A549 (cell line): ENCODE measurements at regions of chr19 and their contacts with region 1.

Region 1: DNA sequence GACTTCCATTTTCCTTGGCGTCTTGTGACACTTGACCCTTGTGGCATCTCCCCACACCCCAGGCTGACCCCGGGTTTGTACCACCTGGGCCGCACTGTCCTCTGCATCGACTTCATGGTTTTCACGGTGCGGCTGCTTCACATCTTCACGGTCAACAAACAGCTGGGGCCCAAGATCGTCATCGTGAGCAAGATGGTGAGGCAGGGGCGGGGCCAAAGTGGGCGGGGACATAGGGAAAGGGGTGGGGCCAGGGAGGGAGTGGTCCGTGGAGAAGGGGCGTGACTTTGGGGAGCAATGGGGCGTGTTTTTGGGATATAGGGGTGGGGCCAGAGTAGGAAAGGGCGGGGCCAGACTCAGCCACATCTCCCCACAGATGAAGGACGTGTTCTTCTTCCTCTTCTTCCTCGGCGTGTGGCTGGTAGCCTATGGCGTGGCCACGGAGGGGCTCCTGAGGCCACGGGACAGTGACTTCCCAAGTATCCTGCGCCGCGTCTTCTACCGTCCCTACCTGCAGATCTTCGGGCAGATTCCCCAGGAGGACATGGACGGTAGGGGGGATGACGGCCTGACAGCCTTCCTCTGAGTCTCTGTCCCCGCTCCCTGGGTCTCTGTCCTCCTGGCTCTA is 42.8 kb downstream of the TRPM4 start:
- DNase-seq: peak; percentile 58
- ATAC-seq: peak; percentile 64 to 80; a peak in 5 of 6 replicates
- H3K4me3 ChIP-seq: no peak overlapping the region
- H3K27ac ChIP-seq: no peak overlapping the region
- H3K4me1 ChIP-seq: peaks cover 4% of the 10 kb centered on the region; the same call in 1 of the 3 replicates
- CTCF ChIP-seq: no peak
- EP300 ChIP-seq: no peak
- POLR2A ChIP-seq: no peak
- RAD21 ChIP-seq: no peak

Region 2: GRCh38 chr19:49073514-49074378 is 126.6 kb before region 1 on chr19:
- CTCF ChIA-PET with region 1: interaction called, 18 read pairs
- POLR2A ChIA-PET with region 1: interaction called, 3 read pairs
- DNase-seq: peak; percentile 65 to 73
- ATAC-seq: peak; percentile 77 to 86
- H3K4me3 ChIP-seq: peak overlapping the region; percentile 6; the same call in 1 of the 3 replicates
- H3K27ac ChIP-seq: 0 out of 6 replicates have a peak overlapping the region, but pooled peaks of 1 of the 2 experiments have one; percentile 9
- H3K4me1 ChIP-seq: peaks cover 16% of the 10 kb centered on the region
- CTCF ChIP-seq: peak; percentile 62
- EP300 ChIP-seq: no peak
- POLR2A ChIP-seq: no peak
- RAD21 ChIP-seq: peak; percentile 40 to 66; a peak in 4 of 5 replicates

Region 3: GRCh38 chr19:49097455-49098288 is 102.7 kb before region 1 on chr19:
- CTCF ChIA-PET with region 1: interaction called, 61 read pairs
- POLR2A ChIA-PET with region 1: interaction called, 5 read pairs
- DNase-seq: peak; percentile 88 to 89
- ATAC-seq: peak; percentile 78 to 83
- H3K4me3 ChIP-seq: no peak overlapping the region
- H3K27ac ChIP-seq: peak overlapping the region in 1 of 2 experiments; percentile 46; a peak in 2 of 6 replicates
- H3K4me1 ChIP-seq: peaks cover 21% of the 10 kb centered on the region
- CTCF ChIP-seq: peak; percentile 99
- EP300 ChIP-seq: no peak
- POLR2A ChIP-seq: no peak
- RAD21 ChIP-seq: peak; percentile 88 to 91

Region 4: GRCh38 chr19:49118565-49119410 is 81.6 kb before region 1 on chr19 and contains the start of gene C19orf73:
- CTCF ChIA-PET with region 1: interaction called, 20 read pairs
- POLR2A ChIA-PET with region 1: no interaction called
- DNase-seq: peak; percentile 94 to 98
- ATAC-seq: peak; percentile 65 to 87
- H3K4me3 ChIP-seq: peak within 1 kb of the TSS; percentile 62
- H3K27ac ChIP-seq: peak within 1 kb of the TSS; percentile 95
- H3K4me1 ChIP-seq: peaks cover 20% of the 10 kb centered on the region
- CTCF ChIP-seq: no peak
- EP300 ChIP-seq: no peak
- POLR2A ChIP-seq: peak; percentile 64
- RAD21 ChIP-seq: no peak
- polyA plus RNA-seq, gene C19orf73: 1.4 and 1.8 TPM in 2 replicates

Region 5: GRCh38 chr19:49133621-49134454 is 66.5 kb before region 1 on chr19:
- CTCF ChIA-PET with region 1: interaction called, 13 read pairs
- POLR2A ChIA-PET with region 1: no interaction called
- DNase-seq: peak; percentile 72 to 73
- ATAC-seq: peak; percentile 58 to 76
- H3K4me3 ChIP-seq: peak overlapping the region; percentile 17
- H3K27ac ChIP-seq: peak overlapping the region; percentile 6 to 54; a peak in 3 of 6 replicates
- H3K4me1 ChIP-seq: no peaks in the 10 kb centered on the region
- CTCF ChIP-seq: no peak
- EP300 ChIP-seq: no peak
- POLR2A ChIP-seq: no peak
- RAD21 ChIP-seq: no peak

Region 6: GRCh38 chr19:49165111-49165750 is 35.1 kb before region 1 on chr19:
- CTCF ChIA-PET with region 1: interaction called, 20 read pairs
- POLR2A ChIA-PET with region 1: no interaction called
- DNase-seq: no peak
- ATAC-seq: no peak; a peak in 1 of 6 replicates
- H3K4me3 ChIP-seq: no peak overlapping the region
- H3K27ac ChIP-seq: no peak overlapping the region
- H3K4me1 ChIP-seq: peaks cover 5% of the 10 kb centered on the region; the same call in 2 of the 3 replicates
- CTCF ChIP-seq: no peak
- EP300 ChIP-seq: no peak
- POLR2A ChIP-seq: no peak
- RAD21 ChIP-seq: no peak

Region 7: DNA sequence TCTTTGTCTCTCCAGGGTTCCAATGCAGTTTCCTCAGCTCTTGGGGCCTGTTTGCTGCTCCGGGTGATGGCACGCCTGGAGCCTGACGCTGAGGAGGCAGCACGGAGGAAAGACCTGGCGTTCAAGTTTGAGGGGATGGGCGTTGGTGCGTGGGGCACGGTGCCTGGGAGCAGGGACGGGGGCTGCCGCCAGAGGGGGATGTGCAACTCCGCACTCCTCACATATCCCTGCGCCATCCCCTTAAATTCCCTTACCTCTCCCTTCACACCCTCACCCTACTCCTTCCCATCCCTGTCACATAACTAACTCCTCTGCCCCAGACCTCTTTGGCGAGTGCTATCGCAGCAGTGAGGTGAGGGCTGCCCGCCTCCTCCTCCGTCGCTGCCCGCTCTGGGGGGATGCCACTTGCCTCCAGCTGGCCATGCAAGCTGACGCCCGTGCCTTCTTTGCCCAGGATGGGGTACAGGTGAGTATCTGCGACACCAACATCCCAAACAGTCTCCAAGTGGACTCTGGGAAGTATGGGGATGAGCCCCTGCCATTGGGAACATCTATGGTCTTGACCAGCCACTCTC is 11.6 kb before region 1 on chr19:
- CTCF ChIA-PET with region 1: interaction called, 69 read pairs
- POLR2A ChIA-PET with region 1: no interaction called
- DNase-seq: no peak
- ATAC-seq: no peak
- H3K4me3 ChIP-seq: no peak overlapping the region
- H3K27ac ChIP-seq: no peak overlapping the region
- H3K4me1 ChIP-seq: no peaks in the 10 kb centered on the region
- CTCF ChIP-seq: no peak
- EP300 ChIP-seq: no peak
- POLR2A ChIP-seq: no peak
- RAD21 ChIP-seq: no peak

Region 8: GRCh38 chr19:49378512-49378911 is 178.2 kb after region 1 on chr19:
- CTCF ChIA-PET with region 1: no interaction called
- POLR2A ChIA-PET with region 1: no interaction called
- DNase-seq: no peak
- ATAC-seq: no peak
- H3K4me3 ChIP-seq: no peak overlapping the region
- H3K27ac ChIP-seq: no peak overlapping the region
- H3K4me1 ChIP-seq: no peaks in the 10 kb centered on the region
- CTCF ChIP-seq: no peak
- EP300 ChIP-seq: no peak
- POLR2A ChIP-seq: no peak
- RAD21 ChIP-seq: no peak